Aorta (tissue), 5 donors: ENCODE measurements at regions of chr16 and their contacts with region 1.

Region 1: GRCh38 chr16:15765880-15766279 is 90.9 kb downstream of the MYH11 start:
- DNase-seq: peak in 1 of 2 donors; percentile 28
- ATAC-seq: peak; percentile 56
- H3K4me3 ChIP-seq: no peak overlapping the region
- H3K27ac ChIP-seq: peak overlapping the region in 1 of 2 donors; percentile 5
- H3K4me1 ChIP-seq: peaks cover 0 to 4% of the 10 kb centered on the region in 2 donors
- H3K27me3 ChIP-seq: no peaks in the 10 kb centered on the region

Region 2: DNA sequence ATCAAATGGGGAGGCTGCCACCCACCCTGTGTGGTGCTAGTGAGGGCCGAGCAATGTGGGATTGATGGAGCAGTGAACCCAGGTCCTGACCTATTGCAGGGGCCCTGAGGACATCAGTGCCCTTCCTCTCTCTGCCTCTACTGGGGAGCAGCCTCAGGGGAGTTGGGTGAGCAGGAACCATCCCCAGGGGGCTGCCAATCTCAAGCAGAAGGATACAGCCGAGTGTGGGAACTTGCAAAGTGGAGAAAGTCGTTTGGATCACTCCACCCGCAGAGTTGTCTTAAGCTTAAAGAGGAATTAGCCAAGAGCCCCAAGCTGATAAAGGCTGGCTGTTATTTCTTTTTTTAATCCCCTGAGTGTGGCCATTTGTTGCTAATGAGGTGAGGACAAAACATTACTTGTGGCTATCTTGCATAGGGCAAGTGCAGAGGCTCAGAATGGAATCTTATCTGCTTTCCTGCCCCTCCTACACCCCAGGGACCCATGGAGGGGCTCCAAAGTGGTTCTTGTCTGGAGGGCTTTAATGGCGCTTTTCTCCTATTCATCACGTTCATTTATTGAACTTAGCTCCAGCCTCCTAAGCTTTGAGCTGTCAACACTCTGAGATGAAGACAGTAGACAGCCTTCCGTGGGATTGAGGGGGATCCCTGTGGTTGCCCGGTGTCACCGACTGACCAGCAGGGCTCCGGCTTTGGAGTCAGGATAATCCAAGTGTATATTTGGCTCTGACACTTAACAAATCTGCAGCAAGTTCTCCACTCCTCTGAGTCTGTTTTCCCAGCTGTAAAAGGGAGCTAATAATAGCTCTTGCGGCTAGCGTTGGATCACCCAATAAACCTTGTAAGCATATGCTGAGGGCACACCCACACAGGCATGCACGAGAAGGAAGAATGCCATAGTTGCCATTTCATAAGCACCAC is 45.9 kb after region 1 on chr16:
- intact Hi-C with region 1: no loop called
- DNase-seq: peak; percentile 71 to 76
- ATAC-seq: peak; percentile 77
- H3K4me3 ChIP-seq: no peak overlapping the region
- H3K27ac ChIP-seq: peak overlapping the region; percentile 33 to 91
- H3K4me1 ChIP-seq: peaks cover 1 to 8% of the 10 kb centered on the region in 2 donors
- H3K27me3 ChIP-seq: no peaks in the 10 kb centered on the region

Region 3: DNA sequence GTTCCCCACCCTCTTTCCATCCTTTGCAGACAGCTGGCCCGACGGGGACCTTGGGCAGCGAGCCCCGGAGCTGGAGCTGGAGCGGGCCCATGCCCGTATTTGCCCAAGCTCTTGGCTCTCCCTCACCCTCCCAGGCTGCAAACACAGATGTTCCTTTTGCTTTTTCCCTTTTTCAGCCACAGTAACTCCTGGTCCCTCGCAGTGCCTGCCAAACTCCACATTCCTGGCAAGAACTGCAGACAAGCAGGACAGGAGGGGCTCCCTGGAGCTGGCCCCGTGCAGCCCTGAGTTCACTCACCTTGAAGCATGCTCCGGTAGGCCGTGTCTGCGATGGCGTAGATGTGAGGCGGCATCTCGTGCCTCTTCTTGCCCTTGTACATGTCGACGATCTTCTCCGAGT is 57.1 kb after region 1 on chr16:
- intact Hi-C with region 1: loop called in 1 of 2 experiments (anchors 5 kb)
- DNase-seq: peak; percentile 87 to 89
- ATAC-seq: peak; percentile 79
- H3K4me3 ChIP-seq: no peak overlapping the region
- H3K27ac ChIP-seq: peak overlapping the region; percentile 57 to 67
- H3K4me1 ChIP-seq: peaks cover 0 to 3% of the 10 kb centered on the region in 2 donors
- H3K27me3 ChIP-seq: no peaks in the 10 kb centered on the region

Region 4: GRCh38 chr16:15835136-15835878 is 69.4 kb after region 1 on chr16:
- intact Hi-C with region 1: no loop called
- DNase-seq: no peak
- ATAC-seq: no peak
- H3K4me3 ChIP-seq: no peak overlapping the region
- H3K27ac ChIP-seq: peak overlapping the region in 1 of 2 donors; percentile 44
- H3K4me1 ChIP-seq: peaks cover 0 to 2% of the 10 kb centered on the region in 2 donors
- H3K27me3 ChIP-seq: no peaks in the 10 kb centered on the region

Region 5: DNA sequence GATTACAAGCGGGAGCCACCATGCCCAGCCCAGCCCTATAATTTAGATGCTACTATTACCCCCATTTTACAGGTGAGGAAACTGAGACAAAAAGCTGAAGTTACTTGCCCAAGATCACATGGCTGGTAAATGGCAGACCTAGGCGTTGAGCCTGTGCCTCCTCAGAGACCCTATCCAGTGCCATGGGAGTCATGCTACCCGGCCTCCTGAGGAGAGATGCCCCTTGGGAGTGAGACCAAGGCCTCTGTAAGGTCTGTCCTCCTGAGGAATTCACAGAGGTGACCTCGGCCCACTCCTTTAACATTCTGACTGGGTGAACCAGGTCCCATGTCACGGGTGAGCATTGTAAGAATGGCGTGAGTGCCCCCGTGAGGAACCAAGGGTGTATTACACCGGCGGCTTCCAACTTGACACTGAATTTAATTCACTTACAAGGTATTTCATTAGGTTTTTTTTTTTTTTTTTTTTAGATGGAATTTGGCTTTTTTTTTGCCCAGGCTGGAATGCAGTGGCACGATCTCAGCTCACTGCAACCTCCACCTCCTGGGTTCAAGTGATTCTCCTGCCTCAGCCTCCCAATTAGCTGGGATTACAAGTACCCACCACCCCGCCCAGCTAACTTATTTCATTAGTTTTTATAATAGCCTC is 361.7 kb after region 1 on chr16:
- intact Hi-C with region 1: loop called in 1 of 2 experiments (anchors 10 kb)
- DNase-seq: peak; percentile 65 to 87
- ATAC-seq: peak; percentile 92
- H3K4me3 ChIP-seq: no peak overlapping the region
- H3K27ac ChIP-seq: peak overlapping the region in 1 of 2 donors; percentile 37
- H3K4me1 ChIP-seq: no peaks in the 10 kb centered on the region
- H3K27me3 ChIP-seq: no peaks in the 10 kb centered on the region